T-cell (primary cell): ENCODE measurements at regions of chr1 and their contacts with region 1.

Region 1: DNA sequence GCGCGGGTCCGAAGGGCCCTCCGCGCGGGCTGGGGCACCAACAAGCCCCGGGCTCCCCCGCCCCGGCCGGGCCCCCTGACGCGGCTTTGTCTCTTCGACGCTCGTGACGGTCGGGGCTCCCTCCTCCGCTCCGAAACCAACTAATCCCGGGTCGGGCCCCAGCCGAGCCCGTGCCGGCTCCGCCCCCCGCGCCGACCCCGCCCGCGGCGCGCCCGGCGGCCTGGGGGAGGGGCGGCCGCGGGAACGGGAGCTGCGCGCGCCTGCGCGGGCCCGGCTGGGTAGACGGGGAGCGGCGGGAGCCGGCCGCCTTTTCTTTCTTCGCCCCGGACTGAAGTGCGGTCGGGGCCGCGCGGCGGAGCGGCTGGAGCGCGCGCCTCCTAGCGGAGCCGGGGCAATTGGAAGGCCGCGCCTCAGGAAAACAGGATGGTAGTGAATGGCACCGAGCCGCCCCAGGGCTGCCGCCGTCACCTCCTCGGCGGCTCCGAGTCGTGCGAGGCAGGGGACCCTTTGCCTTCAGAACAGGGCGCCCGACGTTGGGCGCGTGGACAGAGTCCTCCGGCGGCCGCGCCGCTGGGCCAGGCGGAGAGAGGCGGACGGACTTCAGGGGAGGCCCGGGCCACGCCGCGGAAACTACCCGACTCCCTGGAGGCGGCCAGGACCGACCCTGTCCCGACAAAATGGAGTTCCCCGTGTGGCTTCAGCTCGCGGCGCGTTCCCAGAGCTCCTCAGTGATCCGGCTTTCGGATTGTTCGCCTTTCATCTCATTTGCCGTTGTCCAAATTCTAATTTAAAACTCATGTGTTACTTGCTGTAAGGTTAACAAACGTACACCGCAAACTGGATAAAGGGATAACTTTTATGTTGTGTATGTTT is at the start of gene TP53BP2:
- DNase-seq: peak; percentile 73 to 92 (median 81)
- ATAC-seq: peak; percentile 84 to 90 (median 86)
- H3K4me3 ChIP-seq: peak within 1 kb of the TSS; percentile 74 to 85
- H3K4me3 Mint-ChIP-seq: peak within 1 kb of the TSS; percentile 94 to 97 (median 96)
- H3K27ac ChIP-seq: peak within 1 kb of the TSS; percentile 88
- H3K27ac Mint-ChIP-seq: peak within 1 kb of the TSS; percentile 96 to 97
- H3K4me1 ChIP-seq: peaks cover 9 to 19% of the 10 kb centered on the region in 2 experiments
- H3K4me1 Mint-ChIP-seq: peaks cover 35 to 52% (median 38%) of the 10 kb centered on the region in 3 donors
- H3K27me3 ChIP-seq: no peaks in the 10 kb centered on the region
- H3K27me3 Mint-ChIP-seq: no peaks in the 10 kb centered on the region
- total RNA-seq, gene TP53BP2: 46.9 to 84.0 (median 53.1) TPM

Region 2: DNA sequence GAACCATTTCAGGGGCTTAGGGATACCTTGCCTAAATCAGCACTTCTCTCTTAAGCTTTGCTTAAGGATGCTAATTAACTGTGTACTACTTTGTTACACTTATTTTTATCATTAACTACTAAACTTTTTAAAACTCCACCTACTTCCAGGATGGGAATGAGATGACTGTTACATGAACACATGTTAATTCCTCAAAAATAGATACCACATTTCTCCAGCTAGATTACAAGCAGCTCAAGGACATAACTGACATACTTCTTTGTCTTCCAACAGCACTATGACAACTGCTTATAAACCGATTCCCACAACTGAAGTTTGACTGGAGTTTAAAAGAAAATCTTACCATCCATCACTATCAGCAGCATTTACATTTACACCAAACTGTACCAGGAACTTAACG is 54.0 kb before region 1 on chr1:
- CTCF ChIA-PET with region 1: interaction called in 1 of 2 experiments, 3 read pairs
- POLR2A ChIA-PET with region 1: interaction called in 1 of 2 experiments, 14 read pairs
- DNase-seq: no peak
- ATAC-seq: no peak
- H3K4me3 ChIP-seq: no peak overlapping the region
- H3K4me3 Mint-ChIP-seq: no peak overlapping the region
- H3K27ac ChIP-seq: no peak overlapping the region
- H3K27ac Mint-ChIP-seq: no peak overlapping the region
- H3K4me1 ChIP-seq: no peaks in the 10 kb centered on the region
- H3K4me1 Mint-ChIP-seq: peaks cover 0 to 3% (median 0%) of the 10 kb centered on the region in 3 donors
- H3K27me3 ChIP-seq: no peaks in the 10 kb centered on the region
- H3K27me3 Mint-ChIP-seq: no peaks in the 10 kb centered on the region

Region 3: GRCh38 chr1:223811634-223812415 is 34.2 kb before region 1 on chr1:
- CTCF ChIA-PET with region 1: interaction called in 1 of 2 experiments, 10 read pairs
- POLR2A ChIA-PET with region 1: interaction called in 1 of 2 experiments, 3 read pairs
- DNase-seq: peak in 1 of 35 experiments; percentile 62
- ATAC-seq: peak in 3 of 4 experiments; percentile 51 to 62 (median 57)
- H3K4me3 ChIP-seq: no peak overlapping the region
- H3K4me3 Mint-ChIP-seq: no peak overlapping the region
- H3K27ac ChIP-seq: no peak overlapping the region
- H3K27ac Mint-ChIP-seq: peak overlapping the region; percentile 2 to 44
- H3K4me1 ChIP-seq: peaks cover 11 to 14% of the 10 kb centered on the region in 2 experiments
- H3K4me1 Mint-ChIP-seq: peaks cover 34 to 41% (median 39%) of the 10 kb centered on the region in 3 donors
- H3K27me3 ChIP-seq: no peaks in the 10 kb centered on the region
- H3K27me3 Mint-ChIP-seq: no peaks in the 10 kb centered on the region

Region 4: GRCh38 chr1:223824712-223825111 is 21.3 kb before region 1 on chr1:
- CTCF ChIA-PET with region 1: interaction called, 3 to 10 read pairs
- POLR2A ChIA-PET with region 1: interaction called, 4 to 11 read pairs
- DNase-seq: no peak
- ATAC-seq: no peak
- H3K4me3 ChIP-seq: no peak overlapping the region
- H3K4me3 Mint-ChIP-seq: no peak overlapping the region
- H3K27ac ChIP-seq: no peak overlapping the region
- H3K27ac Mint-ChIP-seq: peak overlapping the region in 1 of 2 donors; percentile 5
- H3K4me1 ChIP-seq: peaks cover 11 to 20% of the 10 kb centered on the region in 2 experiments
- H3K4me1 Mint-ChIP-seq: peaks cover 66 to 79% (median 74%) of the 10 kb centered on the region in 3 donors
- H3K27me3 ChIP-seq: no peaks in the 10 kb centered on the region
- H3K27me3 Mint-ChIP-seq: no peaks in the 10 kb centered on the region

Region 5: GRCh38 chr1:223831755-223832636 is 14.1 kb before region 1 on chr1:
- CTCF ChIA-PET with region 1: interaction called in 1 of 2 experiments, 10 read pairs
- POLR2A ChIA-PET with region 1: interaction called in 1 of 2 experiments, 22 read pairs
- DNase-seq: peak in 1 of 35 experiments; percentile 51
- ATAC-seq: peak; percentile 61 to 70 (median 64)
- H3K4me3 ChIP-seq: no peak overlapping the region
- H3K4me3 Mint-ChIP-seq: peak overlapping the region; percentile 22 to 56 (median 44)
- H3K27ac ChIP-seq: peak overlapping the region; percentile 71
- H3K27ac Mint-ChIP-seq: peak overlapping the region in 1 of 2 donors; percentile 87
- H3K4me1 ChIP-seq: peaks cover 23 to 26% of the 10 kb centered on the region in 2 experiments
- H3K4me1 Mint-ChIP-seq: peaks cover 18 to 21% (median 20%) of the 10 kb centered on the region in 3 donors
- H3K27me3 ChIP-seq: no peaks in the 10 kb centered on the region
- H3K27me3 Mint-ChIP-seq: no peaks in the 10 kb centered on the region

Region 6: GRCh38 chr1:223878598-223879325 is 32.7 kb after region 1 on chr1:
- CTCF ChIA-PET with region 1: no interaction called
- POLR2A ChIA-PET with region 1: no interaction called
- DNase-seq: no peak
- ATAC-seq: no peak
- H3K4me3 ChIP-seq: no peak overlapping the region
- H3K4me3 Mint-ChIP-seq: no peak overlapping the region
- H3K27ac ChIP-seq: no peak overlapping the region
- H3K27ac Mint-ChIP-seq: no peak overlapping the region
- H3K4me1 ChIP-seq: no peaks in the 10 kb centered on the region
- H3K4me1 Mint-ChIP-seq: no peaks in the 10 kb centered on the region
- H3K27me3 ChIP-seq: peaks cover 0 to 10% of the 10 kb centered on the region in 2 experiments
- H3K27me3 Mint-ChIP-seq: peaks cover 6 to 20% of the 10 kb centered on the region in 2 donors

Region 7: DNA sequence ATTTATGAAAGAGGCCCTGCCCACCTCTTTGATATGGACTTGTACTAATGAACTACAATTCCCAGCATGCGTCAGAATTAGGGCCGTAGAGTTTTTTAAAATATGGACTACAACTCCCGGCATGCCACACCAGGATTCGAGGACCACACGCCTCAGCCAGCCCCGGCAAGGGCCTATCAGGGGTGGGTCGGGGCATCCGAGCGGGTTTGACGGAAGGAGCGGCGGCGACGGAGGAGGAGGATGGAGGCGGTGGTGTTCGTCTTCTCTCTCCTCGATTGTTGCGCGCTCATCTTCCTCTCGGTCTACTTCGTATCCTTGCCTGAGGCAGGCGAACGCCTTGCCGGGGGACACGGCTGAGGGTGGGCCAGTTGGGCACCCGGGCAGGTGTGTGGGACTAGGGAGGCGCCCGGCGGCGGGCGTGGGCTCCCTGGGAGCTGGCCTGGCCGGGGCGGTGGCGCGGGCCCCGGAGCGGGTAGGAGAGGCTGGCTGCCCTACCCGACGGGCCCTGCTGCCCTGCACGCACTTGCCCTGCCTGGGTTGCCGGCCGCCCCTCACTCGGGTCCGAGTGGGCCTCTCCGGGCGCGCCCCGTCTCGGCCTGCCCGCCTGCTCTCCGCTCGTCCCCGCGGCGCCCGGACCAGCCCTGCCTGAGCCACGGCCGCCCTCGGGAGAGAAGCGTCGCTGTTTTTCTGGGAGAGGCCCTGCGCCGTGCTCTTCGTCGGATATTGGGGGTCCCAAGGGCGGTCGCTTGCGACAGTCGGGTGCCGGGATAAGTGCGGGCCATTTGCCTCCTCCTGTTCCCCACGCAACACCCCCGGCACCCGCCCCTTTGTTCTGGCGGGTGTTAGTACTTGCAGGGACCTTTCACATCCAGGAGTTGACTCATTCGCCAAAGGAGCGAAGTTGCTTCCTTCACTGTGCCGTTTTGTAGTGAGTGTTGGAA is 510.9 kb after region 1 on chr1 and contains the start of gene CNIH4:
- CTCF ChIA-PET with region 1: no interaction called
- POLR2A ChIA-PET with region 1: no interaction called
- DNase-seq: peak; percentile 80 to 95 (median 91)
- ATAC-seq: peak; percentile 99
- H3K4me3 ChIP-seq: peak within 1 kb of the TSS; percentile 57 to 74
- H3K4me3 Mint-ChIP-seq: peak within 1 kb of the TSS; percentile 87 to 97 (median 91)
- H3K27ac ChIP-seq: peak within 1 kb of the TSS; percentile 48
- H3K27ac Mint-ChIP-seq: peak within 1 kb of the TSS; percentile 86 to 87
- H3K4me1 ChIP-seq: peaks cover 14 to 31% of the 10 kb centered on the region in 2 experiments
- H3K4me1 Mint-ChIP-seq: peaks cover 24 to 46% (median 46%) of the 10 kb centered on the region in 3 donors
- H3K27me3 ChIP-seq: no peaks in the 10 kb centered on the region
- H3K27me3 Mint-ChIP-seq: no peaks in the 10 kb centered on the region
- total RNA-seq, gene CNIH4: 25.9 to 40.9 (median 38.8) TPM